ENCODE measurements at regions of chr7 and their contacts with region 1.

Region 1: GRCh38 chr7:66768865-66769832 is 28.6 kb downstream of the RABGEF1 start:
- DNase-seq: no peak
- H3K4me3 Mint-ChIP-seq: no peak overlapping the region
- H3K27ac Mint-ChIP-seq: no peak overlapping the region
- H3K4me1 Mint-ChIP-seq: peaks cover 23% of the 10 kb centered on the region
- H3K27me3 Mint-ChIP-seq: no peaks in the 10 kb centered on the region

Region 2: GRCh38 chr7:66740302-66740979 is 28.7 kb before region 1 on chr7 and contains the start of gene RABGEF1:
- intact Hi-C with region 1: no loop called
- DNase-seq: peak; percentile 95
- H3K4me3 Mint-ChIP-seq: peak within 1 kb of the TSS; percentile 94
- H3K27ac Mint-ChIP-seq: peak within 1 kb of the TSS; percentile 94
- H3K4me1 Mint-ChIP-seq: peaks cover 14% of the 10 kb centered on the region
- H3K27me3 Mint-ChIP-seq: no peaks in the 10 kb centered on the region
- total RNA-seq, gene RABGEF1: 24.5 and 26.3 TPM in 2 replicates

Region 3: GRCh38 chr7:66758950-66759628 is 10.1 kb before region 1 on chr7:
- intact Hi-C with region 1: loop called (anchors 1 kb)
- DNase-seq: no peak
- H3K4me3 Mint-ChIP-seq: no peak overlapping the region
- H3K27ac Mint-ChIP-seq: peak overlapping the region; percentile 73
- H3K4me1 Mint-ChIP-seq: peaks cover 21% of the 10 kb centered on the region
- H3K27me3 Mint-ChIP-seq: no peaks in the 10 kb centered on the region

Measured in activated T-helper 2 cell treated with anti-CD3 and anti-CD28 coated beads, Interferon-gamma antibody, Interleukin-2, Interleukin-4, amounts not matched to agents 10 μg/mL and 5 μg/mL and 100 μg/mL, durations not matched to agents 14 hours and 24 hours and 36 hours (primary cell).